GM10248 (cell line): ENCODE measurements at regions of chr11 and their contacts with region 1.

Region 1: DNA sequence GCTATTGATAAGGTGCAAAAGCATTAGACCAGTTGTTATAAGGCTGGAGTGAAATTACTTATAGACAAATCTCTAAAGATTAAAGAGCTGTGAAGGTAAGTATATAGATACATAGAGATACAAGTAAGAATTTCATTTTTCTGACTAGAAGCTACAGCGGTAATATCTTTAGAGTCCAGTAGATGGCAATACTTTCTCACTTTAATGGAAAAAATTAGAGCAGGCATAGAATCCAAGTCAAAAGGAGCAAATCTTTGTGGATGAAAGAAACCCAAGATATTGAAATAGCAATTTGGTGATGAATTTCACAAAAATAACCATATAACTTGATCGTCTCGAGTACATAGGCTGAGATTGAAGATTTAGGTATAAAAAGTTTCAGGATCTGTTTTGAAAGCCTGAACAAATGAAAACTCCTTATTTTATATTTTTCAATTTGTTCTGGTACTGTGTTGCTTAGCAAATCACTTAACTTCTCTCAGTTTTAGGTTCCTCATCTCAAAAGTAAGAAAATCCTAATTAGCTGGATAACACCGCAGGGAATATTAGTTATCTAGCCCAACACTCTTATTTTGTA is 81.9 kb downstream of the UVRAG start:
- DNase-seq: no peak
- CTCF ChIP-seq: peak; percentile 31

Region 2: DNA sequence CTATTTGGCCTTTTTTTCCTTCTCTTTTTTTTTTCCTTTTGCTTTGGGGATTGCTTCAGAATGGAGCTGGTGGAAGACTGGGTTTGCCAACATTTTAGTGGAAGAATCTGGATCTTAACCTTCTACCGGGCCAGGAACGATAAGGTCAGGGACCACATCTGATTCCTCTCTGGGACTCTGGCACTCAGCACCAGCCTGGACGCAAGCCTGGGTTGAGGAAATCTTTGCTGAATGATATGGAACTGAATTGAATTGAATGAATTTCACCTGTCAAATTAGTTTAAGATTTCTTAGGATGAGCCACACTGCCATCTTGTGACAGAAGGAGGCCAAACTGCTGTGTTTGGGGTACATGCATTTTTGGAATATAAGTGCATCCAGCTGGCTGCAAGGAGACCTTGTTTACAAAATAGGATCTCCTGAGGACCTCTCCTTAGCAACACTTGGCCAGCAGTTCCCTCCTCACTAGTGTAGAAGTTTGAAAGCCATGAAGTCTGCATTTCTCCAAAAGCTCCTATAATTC is 626.0 kb before region 1 on chr11:
- CTCF ChIA-PET with region 1: no interaction called
- POLR2A ChIA-PET with region 1: no interaction called
- DNase-seq: no peak
- CTCF ChIP-seq: peak; percentile 49

Region 3: DNA sequence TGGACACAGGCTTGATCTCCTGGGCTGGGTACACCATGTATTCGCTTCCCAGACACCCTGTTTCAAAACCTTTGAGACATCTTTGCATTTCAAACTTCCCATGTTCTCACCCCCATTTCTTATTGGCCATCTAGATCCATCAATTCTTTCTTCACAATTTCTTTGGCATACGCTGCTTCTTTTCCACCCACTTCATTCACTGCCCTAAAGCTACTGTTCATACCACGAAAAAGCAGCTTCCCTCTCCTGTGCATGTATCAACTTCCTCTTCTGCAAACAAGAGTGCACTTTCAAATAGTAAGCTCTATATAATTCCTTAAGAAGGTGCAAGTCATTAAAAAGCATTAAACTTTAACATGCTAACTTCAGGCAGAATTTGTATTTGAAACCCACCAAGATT is 60.5 kb before region 1 on chr11:
- CTCF ChIA-PET with region 1: no interaction called
- POLR2A ChIA-PET with region 1: no interaction called
- DNase-seq: no peak
- CTCF ChIP-seq: no peak

Region 4: DNA sequence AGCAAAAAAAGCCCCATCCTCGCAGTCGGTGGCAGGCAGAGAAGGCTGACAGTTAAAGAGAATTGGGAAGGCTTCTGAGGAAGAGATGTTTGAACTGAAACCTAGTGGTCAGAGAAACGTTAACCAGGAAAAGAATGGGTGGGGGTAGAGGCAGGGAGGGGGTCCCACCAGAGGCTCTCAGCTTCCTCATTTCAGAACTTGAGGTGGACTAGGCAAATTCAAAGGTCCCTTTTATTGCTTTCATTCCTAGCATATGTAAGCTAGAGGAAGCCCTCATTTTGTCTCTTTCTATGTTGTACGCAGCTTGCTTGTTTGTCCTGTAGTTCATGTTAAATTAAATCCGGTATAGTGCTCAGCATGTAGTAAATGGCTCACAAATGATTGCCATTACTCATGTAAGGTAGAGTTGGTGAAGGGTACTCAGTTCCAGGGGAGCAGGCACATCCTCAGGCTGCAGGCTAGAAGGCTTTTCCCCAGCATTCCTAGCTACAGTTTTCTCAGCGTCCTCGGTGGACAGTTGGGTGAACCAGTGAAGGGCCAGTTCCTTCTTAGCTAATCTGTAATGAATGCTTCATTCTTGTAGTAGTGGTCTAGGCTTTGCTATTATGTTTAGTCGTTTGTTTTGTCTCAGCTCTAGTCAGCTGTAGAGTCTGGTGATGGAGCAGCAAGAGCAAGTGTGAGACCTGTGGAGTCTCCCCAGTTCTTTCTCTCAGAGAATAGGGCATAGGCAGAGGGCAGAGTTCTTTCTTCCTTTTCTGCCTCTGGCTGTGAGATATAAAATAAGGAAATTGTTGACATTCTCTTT is 23.3 kb before region 1 on chr11:
- CTCF ChIA-PET with region 1: interaction called, 13 read pairs
- POLR2A ChIA-PET with region 1: no interaction called
- DNase-seq: peak; percentile 52
- CTCF ChIP-seq: no peak

Region 5: DNA sequence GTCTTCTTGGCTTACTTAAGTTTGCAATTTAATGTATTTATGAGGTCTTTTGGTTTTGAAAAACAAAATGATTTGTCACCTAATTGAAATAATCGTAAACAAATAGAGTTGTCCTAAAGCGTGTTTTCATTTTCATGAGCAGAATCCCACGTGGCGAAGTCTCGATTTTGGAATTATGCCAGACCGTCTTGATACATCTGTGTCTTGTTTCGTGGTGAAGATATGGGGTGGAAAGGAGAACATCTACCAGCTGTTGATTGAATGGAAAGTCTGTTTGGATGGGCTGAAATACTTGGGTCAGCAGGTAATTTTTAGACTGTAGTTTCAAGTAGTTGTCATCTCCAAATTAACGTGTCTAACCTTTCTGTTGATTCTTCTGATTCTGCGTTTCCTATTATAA is 17.2 kb before region 1 on chr11:
- CTCF ChIA-PET with region 1: interaction called, 15 read pairs
- POLR2A ChIA-PET with region 1: no interaction called
- DNase-seq: no peak
- CTCF ChIP-seq: no peak

Region 6: GRCh38 chr11:75907906-75908527 is 11.1 kb after region 1 on chr11:
- CTCF ChIA-PET with region 1: interaction called, 15 read pairs
- POLR2A ChIA-PET with region 1: no interaction called
- DNase-seq: no peak
- CTCF ChIP-seq: no peak

Region 7: DNA sequence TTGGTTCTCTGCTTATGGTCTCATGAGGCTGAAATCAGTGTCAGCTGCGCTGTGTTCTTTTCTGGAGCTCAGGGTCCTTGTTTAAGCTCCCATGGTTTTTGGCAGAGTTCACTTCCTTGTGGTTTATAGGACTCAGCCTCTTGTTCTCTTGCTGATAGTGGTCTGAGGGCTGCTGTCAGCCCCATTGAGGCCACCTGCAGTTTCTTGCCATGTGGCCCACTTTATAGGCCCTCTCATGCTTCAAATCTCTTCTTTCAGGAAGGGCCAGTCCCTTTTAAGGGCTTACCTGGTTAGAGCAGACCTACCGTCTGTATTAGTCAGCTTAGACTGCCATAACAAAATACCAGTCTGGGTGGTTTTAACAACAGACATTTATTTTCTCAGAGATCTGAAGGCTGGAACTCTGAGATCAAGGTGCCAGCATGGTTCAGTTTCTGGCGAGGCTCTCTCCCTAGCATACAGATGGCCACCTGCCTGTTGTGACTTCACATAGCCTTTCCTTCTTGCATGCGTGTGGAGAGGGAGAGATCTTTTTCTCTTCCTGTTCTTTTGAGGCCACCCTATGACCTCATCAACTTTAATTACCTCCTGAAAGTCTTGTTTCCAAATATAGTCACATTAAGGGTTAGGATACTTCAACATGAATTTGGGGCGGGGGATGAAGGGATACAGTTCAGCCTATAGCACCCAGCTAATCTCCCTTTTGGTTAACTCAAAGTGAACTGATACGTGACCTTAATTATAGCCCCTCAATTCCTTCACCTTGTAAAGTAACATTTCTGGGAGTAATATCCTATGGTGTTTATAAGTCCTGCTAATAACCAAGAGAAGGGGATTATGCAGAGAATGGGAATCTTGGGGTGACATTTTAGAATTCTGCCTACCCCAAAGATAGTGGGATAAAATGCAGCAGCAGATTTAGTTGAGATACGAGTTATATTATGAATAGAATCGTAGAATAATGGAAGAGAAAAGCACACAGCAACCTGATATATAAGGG is 49.9 kb after region 1 on chr11:
- CTCF ChIA-PET with region 1: interaction called, 10 read pairs
- POLR2A ChIA-PET with region 1: no interaction called
- DNase-seq: no peak
- CTCF ChIP-seq: no peak